ENCODE measurements at regions of chr20 and their contacts with region 1.

Region 1: DNA sequence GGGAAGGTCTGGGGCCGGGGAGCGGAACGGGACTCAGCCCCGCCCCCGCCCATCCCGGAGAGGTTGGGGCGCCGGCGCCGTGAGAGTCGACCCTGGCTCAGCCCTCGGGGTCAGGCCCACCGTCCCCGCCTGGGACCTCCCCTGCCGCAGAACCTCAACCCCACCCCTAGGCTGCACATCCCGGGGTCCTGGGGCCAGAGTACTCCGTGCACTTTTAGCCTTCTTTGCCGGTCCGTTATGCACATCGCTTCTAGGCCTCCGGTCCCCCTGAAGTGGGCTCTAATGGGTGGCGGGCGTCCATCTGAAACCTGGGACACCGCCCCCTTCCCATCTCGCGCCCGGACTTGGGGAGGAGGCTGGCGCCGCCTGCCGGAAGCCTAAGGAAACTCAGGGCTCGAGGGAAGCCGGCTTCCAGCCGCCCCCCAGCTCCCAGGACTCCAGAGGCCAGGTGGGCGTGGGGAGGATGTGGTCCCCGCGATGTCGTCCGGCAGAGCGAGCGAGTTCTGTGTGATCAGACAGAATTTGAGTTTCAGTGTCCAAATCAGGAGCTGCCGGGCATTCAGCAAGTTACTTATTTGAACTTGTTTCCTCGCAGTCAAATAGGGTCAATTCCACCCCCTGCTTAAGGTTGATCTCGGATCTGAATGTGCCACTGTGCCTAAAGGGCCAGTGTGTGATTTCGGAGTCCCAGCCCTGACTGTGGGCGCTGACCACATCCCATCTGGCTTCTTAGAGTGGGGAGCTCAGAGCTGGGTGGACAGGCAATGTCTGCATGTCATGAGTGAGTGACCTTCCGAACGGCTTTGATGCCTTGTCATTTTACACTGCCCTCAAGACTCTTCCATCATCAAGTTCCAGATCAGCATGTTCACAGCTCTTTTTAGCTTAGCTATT is 47.6 kb downstream of the CPXM1 start:
- H3K4me3 ChIP-seq: peak overlapping the region; percentile 34
- H3K27ac ChIP-seq: peak overlapping the region; percentile 70; the same call in 1 of the 2 replicates
- H3K4me1 ChIP-seq: peaks cover 3% of the 10 kb centered on the region
- CTCF ChIP-seq: peak; percentile 88

Region 2: DNA sequence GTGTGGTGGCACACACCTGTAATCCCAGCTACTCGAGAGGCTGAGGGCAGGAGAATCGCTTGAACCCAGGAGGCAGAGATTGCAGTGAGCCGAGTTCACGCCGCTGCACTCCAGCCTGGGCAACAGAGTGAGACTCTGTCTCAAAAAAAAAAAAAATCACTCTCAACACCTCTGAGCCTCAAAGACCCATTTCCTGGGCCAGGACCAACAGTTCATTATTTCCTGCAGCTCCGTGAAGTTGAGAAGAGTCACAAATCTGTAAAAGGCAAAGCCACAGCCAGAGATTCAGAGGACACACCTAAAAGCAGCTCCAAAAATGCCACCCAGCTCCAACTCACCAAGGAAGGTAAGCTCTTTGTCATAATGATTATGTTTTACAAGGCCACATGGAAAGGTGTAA is 115.6 kb before region 1 on chr20:
- CTCF ChIA-PET with region 1: no interaction called
- POLR2A ChIA-PET with region 1: no interaction called
- H3K4me3 ChIP-seq: no peak overlapping the region
- H3K27ac ChIP-seq: no peak overlapping the region
- H3K4me1 ChIP-seq: no peaks in the 10 kb centered on the region
- CTCF ChIP-seq: no peak

Region 3: GRCh38 chr20:2729251-2729713 is 23.5 kb before region 1 on chr20:
- CTCF ChIA-PET with region 1: interaction called, 10 read pairs
- POLR2A ChIA-PET with region 1: no interaction called
- H3K4me3 ChIP-seq: no peak overlapping the region
- H3K27ac ChIP-seq: no peak overlapping the region
- H3K4me1 ChIP-seq: no peaks in the 10 kb centered on the region
- CTCF ChIP-seq: no peak

Region 4: DNA sequence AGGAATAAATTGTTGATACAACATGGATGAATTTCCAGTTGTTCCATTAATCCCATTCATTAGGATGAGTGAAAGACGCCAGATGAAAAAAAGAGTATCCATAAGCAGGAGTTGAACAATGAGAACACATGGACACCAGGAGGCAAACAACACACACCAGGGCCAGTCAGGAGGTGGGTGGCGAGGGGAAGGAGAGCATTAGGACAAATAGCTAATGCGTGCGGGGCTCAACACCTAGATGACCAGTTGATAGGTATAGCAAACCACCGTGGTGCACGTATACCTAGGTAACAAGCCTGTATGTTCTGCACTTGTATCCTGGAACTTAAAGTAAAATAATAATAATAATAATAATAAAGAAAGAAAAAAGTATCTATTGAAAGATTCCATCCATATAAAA is 76.6 kb after region 1 on chr20:
- CTCF ChIA-PET with region 1: no interaction called
- POLR2A ChIA-PET with region 1: no interaction called
- H3K4me3 ChIP-seq: no peak overlapping the region
- H3K27ac ChIP-seq: no peak overlapping the region
- H3K4me1 ChIP-seq: no peaks in the 10 kb centered on the region
- CTCF ChIP-seq: no peak

Region 5: GRCh38 chr20:2840138-2840966 is 87.5 kb after region 1 on chr20 and contains the starts of genes PCED1A and VPS16:
- CTCF ChIA-PET with region 1: interaction called, 159 read pairs
- POLR2A ChIA-PET with region 1: no interaction called
- H3K4me3 ChIP-seq: peak within 1 kb of the TSS; percentile 71
- H3K27ac ChIP-seq: peak within 1 kb of the TSS; percentile 92
- H3K4me1 ChIP-seq: peaks cover 6% of the 10 kb centered on the region; the same call in 1 of the 2 replicates
- CTCF ChIP-seq: 0 out of 2 replicates have a peak, but pooled peaks have one; percentile 11

Region 6: DNA sequence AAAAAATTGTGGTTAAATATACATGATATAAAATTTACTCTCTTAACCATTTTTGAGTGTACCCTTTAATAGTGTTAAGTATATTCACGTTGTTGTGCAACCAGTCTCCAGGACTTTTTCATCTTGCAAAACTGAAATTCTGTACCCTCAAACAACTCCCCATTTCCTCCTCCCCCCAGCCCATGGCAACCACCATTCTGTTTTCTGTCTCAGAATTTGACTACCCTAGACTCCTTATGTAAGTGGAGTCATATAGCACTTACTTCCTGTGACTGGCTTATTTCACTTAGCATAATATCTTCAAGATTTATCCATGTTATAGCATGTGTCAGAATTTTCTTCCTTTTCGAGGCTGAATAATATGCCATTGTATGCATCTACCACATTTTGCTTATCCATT is 92.8 kb after region 1 on chr20:
- CTCF ChIA-PET with region 1: interaction called, 159 read pairs
- POLR2A ChIA-PET with region 1: no interaction called
- H3K4me3 ChIP-seq: no peak overlapping the region
- H3K27ac ChIP-seq: no peak overlapping the region
- H3K4me1 ChIP-seq: 0 out of 2 replicates have a peak, but pooled peaks cover 2% of the 10 kb centered on the region
- CTCF ChIP-seq: no peak

Region 7: DNA sequence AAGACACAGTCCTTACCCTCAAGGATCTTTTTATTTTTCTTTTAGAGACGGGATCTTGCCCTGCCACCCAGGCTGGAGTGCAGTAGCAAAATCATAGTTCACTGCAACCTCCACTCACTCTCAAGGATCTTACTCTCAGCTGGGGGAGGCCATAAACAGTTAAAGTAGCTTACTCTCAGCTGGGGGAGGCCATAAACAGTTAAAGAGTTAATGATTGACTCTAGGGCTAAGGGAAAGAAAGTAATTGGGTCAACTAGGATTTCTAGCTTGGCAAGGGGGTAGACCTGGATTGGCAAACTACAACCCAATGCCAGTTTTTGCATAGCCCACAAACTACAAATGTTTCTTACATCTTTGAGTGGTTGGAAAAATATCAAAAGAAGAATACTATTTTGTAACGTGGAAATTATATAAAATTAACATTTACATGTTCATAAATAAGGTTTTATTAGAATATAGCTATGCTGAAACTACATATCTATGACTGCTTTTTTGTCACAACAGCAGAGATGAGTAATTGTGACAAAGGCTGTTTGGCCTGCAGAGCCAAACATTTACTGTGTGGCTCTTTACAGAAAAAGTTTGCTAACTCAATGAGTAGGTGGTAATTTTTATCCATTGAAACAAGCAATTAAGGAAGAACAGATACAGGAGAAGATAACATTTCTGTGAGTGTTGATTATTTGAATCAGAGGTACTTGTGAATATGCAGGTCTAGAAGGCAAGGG is 166.9 kb after region 1 on chr20:
- CTCF ChIA-PET with region 1: no interaction called
- POLR2A ChIA-PET with region 1: no interaction called
- H3K4me3 ChIP-seq: no peak overlapping the region
- H3K27ac ChIP-seq: no peak overlapping the region
- H3K4me1 ChIP-seq: peaks cover 11% of the 10 kb centered on the region; the same call in 1 of the 2 replicates
- CTCF ChIP-seq: no peak

Measured in HEK293 (cell line).